Posterior cingulate gyrus (tissue), 11 donors: ENCODE measurements at regions of chr1 and their contacts with region 1.

Region 1: GRCh38 chr1:93078986-93079654 is at the start of gene MTF2:
- DNase-seq: peak; percentile 91 to 99 (median 94)

Region 2: DNA sequence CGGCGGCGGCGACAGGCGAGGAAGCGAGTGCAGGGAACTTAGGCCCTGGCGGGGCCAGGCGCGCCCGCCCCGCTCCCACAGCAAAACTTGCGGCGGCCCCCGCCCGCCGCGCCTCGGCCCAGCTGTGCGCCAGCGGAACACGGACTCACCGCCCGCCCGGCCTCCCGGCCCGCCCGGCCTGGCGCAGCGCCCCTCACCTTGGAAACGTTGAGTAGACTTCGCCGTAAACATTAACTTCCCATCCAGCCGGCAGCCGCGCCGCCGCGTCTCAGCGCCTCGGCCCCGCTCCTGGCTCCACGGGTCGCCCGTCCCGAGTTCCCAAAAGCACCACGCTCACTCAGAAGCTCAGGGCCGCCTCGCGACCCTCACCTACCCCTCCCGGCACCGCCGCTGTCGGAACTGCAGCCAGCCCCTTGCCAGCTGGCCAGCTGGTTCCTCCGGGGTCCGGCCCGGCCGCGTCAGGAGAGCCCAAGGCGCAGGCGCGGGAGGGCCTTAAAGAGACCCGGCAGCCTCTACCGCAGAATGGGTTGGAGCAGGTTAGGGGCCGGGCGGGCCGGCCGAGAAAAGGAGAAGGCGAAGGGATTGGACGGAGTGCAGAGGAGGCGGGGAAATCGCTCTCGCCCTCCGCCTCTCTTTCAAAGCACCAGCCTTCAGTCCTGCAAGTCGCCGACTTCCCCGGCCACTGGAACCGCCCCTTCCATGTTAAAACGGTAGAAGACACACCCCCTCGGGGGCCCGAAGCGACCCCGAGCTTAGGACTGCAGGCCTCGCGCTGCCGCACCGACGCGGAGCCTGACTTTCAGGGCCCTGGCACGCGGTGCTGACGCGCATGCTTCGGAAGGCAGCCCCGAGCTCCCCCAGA is 294.2 kb before region 1 on chr1 and contains the start of gene EVI5:
- intact Hi-C with region 1: loop called (anchors 10 kb)
- DNase-seq: peak; percentile 78 to 98 (median 90)

Region 3: DNA sequence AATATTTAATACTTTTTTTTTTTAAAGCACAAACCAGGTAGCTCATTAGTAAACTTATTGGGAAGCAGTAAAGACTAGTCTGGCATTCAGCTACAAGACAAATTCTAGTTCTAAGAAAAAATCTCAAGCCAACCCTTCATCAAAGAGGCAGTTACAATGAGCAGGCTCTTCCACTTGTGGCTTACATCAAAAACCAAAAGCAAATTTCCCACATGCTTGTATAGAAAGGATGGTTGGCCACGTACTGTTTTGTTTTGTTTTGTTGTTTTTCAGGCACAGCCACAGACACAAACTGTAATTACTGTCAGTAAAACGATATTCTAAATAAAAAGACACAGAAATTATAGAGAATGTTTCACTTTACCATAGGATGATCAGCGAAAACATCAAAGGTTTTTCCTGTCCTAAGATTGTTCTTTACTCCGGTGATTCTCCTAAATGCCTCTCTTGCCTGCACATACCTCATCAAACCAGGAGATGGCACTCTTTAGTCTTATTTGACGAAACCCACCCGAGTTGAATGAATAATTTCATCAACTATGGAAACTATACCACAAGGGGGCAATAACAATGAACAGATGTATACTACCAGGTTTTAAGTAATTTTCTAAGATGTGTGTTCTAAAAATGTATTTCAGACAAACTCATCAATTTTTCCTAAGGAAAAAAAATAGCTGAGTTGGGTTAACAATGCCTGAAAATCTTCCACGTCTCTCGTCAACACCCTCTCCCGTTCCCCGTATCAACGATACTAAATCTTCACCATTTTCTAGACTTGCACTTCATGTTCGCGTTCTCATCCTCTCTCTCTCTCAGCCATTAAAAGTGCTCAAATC is 220.3 kb before region 1 on chr1:
- intact Hi-C with region 1: loop called (anchors 10 kb)
- DNase-seq: peak in 1 of 10 donors; percentile 52

Region 4: DNA sequence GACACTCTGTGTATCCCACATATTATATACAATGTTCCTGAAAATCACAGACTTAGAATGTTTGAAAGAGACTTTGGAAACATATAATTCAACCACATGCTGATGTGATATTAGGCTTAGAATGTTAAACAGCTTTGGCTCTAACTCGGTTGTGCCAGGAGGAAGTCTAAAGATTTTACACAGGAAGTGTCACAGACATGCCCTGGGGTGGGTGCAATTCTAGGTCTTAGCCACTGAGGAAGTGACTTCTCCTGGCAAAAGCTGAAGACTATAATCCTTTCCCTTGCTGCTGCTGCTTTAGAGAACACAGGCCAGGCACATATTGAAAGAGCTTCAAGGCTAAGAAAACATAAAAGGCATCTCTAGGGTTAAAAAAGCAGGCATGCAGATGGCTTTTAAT is 196.3 kb before region 1 on chr1:
- intact Hi-C with region 1: no loop called
- DNase-seq: no peak

Region 5: DNA sequence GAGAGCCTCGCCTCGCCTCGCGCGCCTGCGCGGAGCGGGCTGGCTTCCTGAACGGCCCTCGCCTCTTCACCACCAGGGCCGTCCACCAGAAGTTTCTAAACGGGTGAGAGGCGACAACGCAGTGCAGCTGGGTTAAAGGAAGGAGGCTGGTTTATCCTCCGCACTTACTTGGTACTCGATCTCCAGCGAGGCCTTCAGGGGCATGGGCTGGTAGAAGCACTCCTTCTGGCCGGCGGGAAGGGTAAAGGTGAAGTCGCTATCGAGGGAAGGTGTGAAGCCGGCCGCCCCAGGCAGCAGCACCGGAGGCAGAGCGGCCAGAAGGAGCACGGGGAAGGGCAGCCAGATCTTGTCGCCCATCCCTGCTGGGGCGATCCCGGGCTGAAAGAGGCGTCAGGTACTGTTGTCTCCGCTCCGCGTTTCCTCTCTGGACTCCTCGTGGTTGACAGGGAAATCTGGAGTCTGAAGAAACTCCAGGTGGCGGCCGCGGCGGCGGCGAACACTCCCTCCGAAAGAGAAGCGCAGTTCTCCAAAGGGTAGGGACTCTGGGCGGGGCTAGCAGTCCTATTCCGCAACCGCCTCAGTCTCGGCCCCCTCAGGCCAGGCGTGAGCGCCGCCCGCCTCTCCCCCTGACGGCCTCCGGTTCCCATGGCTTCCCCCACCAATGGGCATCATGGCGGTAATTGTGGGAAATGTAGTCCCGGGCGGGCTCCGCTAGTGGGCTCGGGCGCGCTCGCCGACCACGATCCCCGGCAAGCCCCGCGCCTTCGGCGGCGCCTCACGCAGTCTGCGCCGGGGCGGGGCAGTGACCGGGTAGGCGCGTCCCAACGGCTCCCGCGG is 101.0 kb after region 1 on chr1 and contains the start of gene TMED5:
- intact Hi-C with region 1: loop called (anchors 2 kb)
- DNase-seq: peak; percentile 93 to 99 (median 97)

Region 6: DNA sequence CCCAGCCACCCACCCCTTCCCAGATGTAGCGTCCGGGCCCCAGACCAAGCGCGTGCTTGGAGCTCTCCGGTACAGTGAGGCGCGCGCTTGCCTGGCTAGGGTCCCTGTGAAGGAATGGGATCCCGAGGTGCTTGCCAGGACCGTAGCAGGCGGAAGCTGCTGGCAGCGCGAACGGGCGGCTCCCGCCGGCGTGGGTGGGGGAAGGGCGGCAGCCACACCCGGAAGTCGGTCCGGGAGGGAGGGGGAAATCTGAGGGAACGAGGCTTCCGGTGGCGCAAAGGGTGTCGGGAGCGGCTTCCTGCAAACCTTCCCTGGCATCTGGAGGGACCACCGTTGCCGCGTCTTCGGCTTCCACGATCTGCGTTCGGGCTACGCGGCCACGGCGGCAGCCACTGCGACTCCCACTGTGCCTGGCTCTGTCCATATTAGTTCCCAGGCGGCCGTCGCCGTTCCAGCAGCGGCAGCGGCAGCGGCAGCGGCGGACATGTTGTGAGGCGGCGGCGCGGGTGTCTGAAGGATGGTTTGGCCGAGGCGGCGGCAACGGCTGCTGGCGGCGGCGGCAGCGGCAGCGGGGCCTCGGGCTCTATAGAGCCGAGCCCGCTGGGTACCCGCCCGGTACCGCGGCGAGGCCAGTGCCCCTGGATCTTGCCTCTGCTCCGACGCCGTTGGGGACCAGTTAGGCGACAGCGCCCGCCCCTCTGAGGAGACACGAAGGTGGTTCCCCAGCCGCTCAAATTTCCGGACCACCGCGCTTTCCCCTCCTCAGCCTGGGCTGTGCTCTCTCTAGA is 266.7 kb after region 1 on chr1 and contains the start of gene DR1:
- intact Hi-C with region 1: loop called (anchors 5 kb)
- DNase-seq: peak; percentile 89 to 99 (median 94)